ENCODE measurements at regions of chr3 and their contacts with region 1.

Region 1: DNA sequence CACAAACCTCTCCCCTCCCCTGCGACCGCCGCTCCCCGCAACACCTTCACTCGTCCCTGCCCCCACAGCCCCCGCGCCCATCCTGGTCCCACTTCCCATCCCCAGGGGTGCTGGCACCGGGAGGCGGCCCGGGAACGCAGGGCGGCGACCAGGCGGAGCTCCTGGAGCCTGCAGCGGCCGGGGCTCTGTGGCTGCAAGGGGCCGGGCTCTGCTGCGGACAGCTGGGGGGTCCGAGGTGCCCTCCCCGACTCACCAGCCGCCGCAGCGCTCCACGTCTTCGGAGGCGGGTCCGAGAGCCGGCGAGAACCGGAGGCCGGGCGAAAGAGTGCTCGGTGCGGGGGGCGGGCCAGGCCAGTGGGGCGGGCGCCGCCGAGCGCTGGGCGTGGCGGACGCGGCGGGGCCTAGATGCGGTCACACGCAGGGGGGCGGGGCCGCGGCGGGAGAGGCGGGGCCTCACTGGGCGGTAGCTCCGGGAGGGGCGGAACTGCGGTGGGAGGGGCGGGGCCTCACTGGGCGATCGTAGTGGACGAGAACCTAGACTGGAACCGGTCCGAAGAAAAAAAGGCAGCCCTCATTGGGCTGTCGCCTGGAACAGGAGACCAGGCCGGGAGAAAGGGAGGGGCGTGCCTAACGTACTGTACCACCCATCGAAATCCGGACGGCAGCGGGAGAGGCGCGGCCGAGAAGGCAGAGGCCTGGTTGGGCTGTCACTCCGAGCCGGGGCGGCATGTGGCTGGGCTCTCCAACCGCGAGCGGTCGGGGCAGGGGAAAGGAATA is at the start of gene ANO10:
- DNase-seq: peak; percentile 85 to 97 (median 95)
- ATAC-seq: peak; percentile 94
- H3K4me3 ChIP-seq: peak within 1 kb of the TSS; percentile 69 to 83
- H3K4me3 Mint-ChIP-seq: peak within 1 kb of the TSS; percentile 87
- H3K27ac ChIP-seq: peak within 1 kb of the TSS; percentile 46
- H3K27ac Mint-ChIP-seq: peak within 1 kb of the TSS; percentile 76
- H3K4me1 ChIP-seq: peaks cover 13% of the 10 kb centered on the region
- H3K4me1 Mint-ChIP-seq: peaks cover 17% of the 10 kb centered on the region
- H3K27me3 ChIP-seq: no peaks in the 10 kb centered on the region
- H3K27me3 Mint-ChIP-seq: no peaks in the 10 kb centered on the region
- CTCF ChIP-seq: no peak
- total RNA-seq, gene ANO10: 6.1 to 7.0 TPM

Region 2: DNA sequence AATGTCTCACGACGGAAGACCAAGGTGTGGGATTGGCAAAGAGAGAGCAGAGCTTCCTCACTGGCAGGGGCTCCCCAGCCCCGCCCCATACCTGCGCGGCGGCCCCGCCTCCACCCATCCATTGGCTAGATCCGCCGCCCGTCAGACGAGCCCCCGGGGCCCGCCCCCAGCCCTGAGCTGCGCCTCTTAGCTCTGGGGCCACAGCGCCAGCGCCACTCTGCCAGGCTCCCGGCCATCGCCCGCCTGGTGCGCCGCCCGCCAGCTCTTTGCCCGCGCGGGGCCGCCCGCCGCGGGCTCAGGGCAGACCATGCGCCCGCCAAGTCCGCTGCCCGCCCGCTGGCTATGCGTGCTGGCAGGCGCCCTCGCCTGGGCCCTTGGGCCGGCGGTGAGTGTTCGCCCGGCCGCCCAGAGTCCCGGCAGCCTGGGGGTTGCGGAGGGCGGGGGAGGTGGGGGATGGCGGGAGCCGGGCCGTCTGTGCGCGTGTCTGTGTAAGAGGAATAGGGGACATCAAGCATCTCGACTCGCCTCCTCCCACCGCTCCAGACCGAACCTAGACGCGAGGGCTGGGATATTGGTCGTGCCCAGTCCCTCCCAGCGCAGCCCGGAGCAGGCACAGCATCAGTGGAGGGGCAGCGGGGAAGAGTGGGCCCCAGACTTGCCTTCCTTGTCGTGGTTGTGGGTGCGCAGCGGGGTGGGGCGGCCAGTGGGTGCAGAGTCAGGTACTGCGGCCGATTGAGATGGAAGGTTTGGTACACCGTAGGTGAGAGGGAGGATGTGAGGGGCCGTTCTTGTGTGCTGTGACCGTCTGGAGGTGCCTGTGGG is 1119.2 kb before region 1 on chr3 and contains the start of gene VIPR1:
- CTCF ChIA-PET with region 1: no interaction called
- POLR2A ChIA-PET with region 1: no interaction called
- intact Hi-C with region 1: loop called in 1 of 2 experiments (anchors 10 kb)
- DNase-seq: peak; percentile 90 to 97 (median 92)
- ATAC-seq: peak; percentile 97
- H3K4me3 ChIP-seq: peak within 1 kb of the TSS; percentile 59 to 95
- H3K4me3 Mint-ChIP-seq: peak within 1 kb of the TSS; percentile 95
- H3K27ac ChIP-seq: peak within 1 kb of the TSS; percentile 12 to 62
- H3K27ac Mint-ChIP-seq: peak within 1 kb of the TSS; percentile 91
- H3K4me1 ChIP-seq: peaks cover 52% of the 10 kb centered on the region
- H3K4me1 Mint-ChIP-seq: peaks cover 49% of the 10 kb centered on the region
- H3K27me3 ChIP-seq: peaks cover 3 to 7% of the 10 kb centered on the region in 2 experiments
- H3K27me3 Mint-ChIP-seq: peaks cover 16% of the 10 kb centered on the region
- CTCF ChIP-seq: no peak
- total RNA-seq, gene VIPR1: 31.2 to 34.3 TPM

Region 3: GRCh38 chr3:42804106-42804830 is 817.6 kb before region 1 on chr3 and contains the start of gene HIGD1A:
- CTCF ChIA-PET with region 1: no interaction called
- POLR2A ChIA-PET with region 1: no interaction called
- intact Hi-C with region 1: loop called (anchors 5 to 10 kb)
- DNase-seq: peak; percentile 82 to 97 (median 92)
- ATAC-seq: peak; percentile 98
- H3K4me3 ChIP-seq: peak within 1 kb of the TSS; percentile 84 to 90
- H3K4me3 Mint-ChIP-seq: peak within 1 kb of the TSS; percentile 98
- H3K27ac ChIP-seq: peak within 1 kb of the TSS; percentile 68 to 87
- H3K27ac Mint-ChIP-seq: peak within 1 kb of the TSS; percentile 91
- H3K4me1 ChIP-seq: peaks cover 26% of the 10 kb centered on the region
- H3K4me1 Mint-ChIP-seq: peaks cover 49% of the 10 kb centered on the region
- H3K27me3 ChIP-seq: no peaks in the 10 kb centered on the region
- H3K27me3 Mint-ChIP-seq: peaks cover 4% of the 10 kb centered on the region
- CTCF ChIP-seq: no peak
- total RNA-seq, gene HIGD1A: 10.9 to 11.8 TPM

Region 4: GRCh38 chr3:43286115-43286840 is 335.6 kb before region 1 on chr3 and contains the start of gene SNRK:
- CTCF ChIA-PET with region 1: no interaction called
- POLR2A ChIA-PET with region 1: no interaction called
- intact Hi-C with region 1: loop called in 1 of 2 experiments (anchors 5 kb)
- DNase-seq: peak; percentile 86 to 99 (median 93)
- ATAC-seq: peak; percentile 84
- H3K4me3 ChIP-seq: peak within 1 kb of the TSS; percentile 76 to 82
- H3K4me3 Mint-ChIP-seq: peak within 1 kb of the TSS; percentile 99
- H3K27ac ChIP-seq: peak within 1 kb of the TSS; percentile 87 to 91
- H3K27ac Mint-ChIP-seq: peak within 1 kb of the TSS; percentile 100
- H3K4me1 ChIP-seq: peaks cover 27% of the 10 kb centered on the region
- H3K4me1 Mint-ChIP-seq: peaks cover 31% of the 10 kb centered on the region
- H3K27me3 ChIP-seq: no peaks in the 10 kb centered on the region
- H3K27me3 Mint-ChIP-seq: no peaks in the 10 kb centered on the region
- CTCF ChIP-seq: peak; percentile 48
- total RNA-seq, gene SNRK: 280 to 281 TPM

Region 5: GRCh38 chr3:43759297-43759782 is 137.5 kb after region 1 on chr3:
- CTCF ChIA-PET with region 1: no interaction called
- POLR2A ChIA-PET with region 1: no interaction called
- intact Hi-C with region 1: loop called in 1 of 2 experiments (anchors 5 kb)
- DNase-seq: peak in 2 of 9 experiments; percentile 25 to 37
- ATAC-seq: peak; percentile 43
- H3K4me3 ChIP-seq: no peak overlapping the region
- H3K4me3 Mint-ChIP-seq: no peak overlapping the region
- H3K27ac ChIP-seq: no peak overlapping the region
- H3K27ac Mint-ChIP-seq: no peak overlapping the region
- H3K4me1 ChIP-seq: peaks cover 40% of the 10 kb centered on the region
- H3K4me1 Mint-ChIP-seq: peaks cover 52% of the 10 kb centered on the region
- H3K27me3 ChIP-seq: no peaks in the 10 kb centered on the region
- H3K27me3 Mint-ChIP-seq: no peaks in the 10 kb centered on the region
- CTCF ChIP-seq: no peak

Measured in CD8-positive, alpha-beta T cell (primary cell).